KBM-7 (cell line): ENCODE measurements at regions of chr22 and their contacts with region 1.

Region 1: GRCh38 chr22:49789289-49790141 is 38.2 kb downstream of the BRD1 start:
- DNase-seq: peak; percentile 65

Region 2: GRCh38 chr22:49880281-49880680 is 90.8 kb after region 1 on chr22:
- in situ Hi-C with region 1: loop called (anchors 25 kb)
- DNase-seq: peak; percentile 62